ENCODE measurements at regions of chr3 and their contacts with region 1.

Region 1: GRCh38 chr3:63961891-63962290 is 49.7 kb upstream of the SCAANT1 start:
- DNase-seq: peak; percentile 15
- H3K4me3 ChIP-seq: no peak overlapping the region
- H3K27ac ChIP-seq: no peak overlapping the region
- H3K4me1 ChIP-seq: no peaks in the 10 kb centered on the region
- H3K27me3 ChIP-seq: no peaks in the 10 kb centered on the region
- CTCF ChIP-seq: peak in 3 of 4 experiments; percentile 52 to 73 (median 69)
- POLR2A ChIP-seq: no peak

Region 2: DNA sequence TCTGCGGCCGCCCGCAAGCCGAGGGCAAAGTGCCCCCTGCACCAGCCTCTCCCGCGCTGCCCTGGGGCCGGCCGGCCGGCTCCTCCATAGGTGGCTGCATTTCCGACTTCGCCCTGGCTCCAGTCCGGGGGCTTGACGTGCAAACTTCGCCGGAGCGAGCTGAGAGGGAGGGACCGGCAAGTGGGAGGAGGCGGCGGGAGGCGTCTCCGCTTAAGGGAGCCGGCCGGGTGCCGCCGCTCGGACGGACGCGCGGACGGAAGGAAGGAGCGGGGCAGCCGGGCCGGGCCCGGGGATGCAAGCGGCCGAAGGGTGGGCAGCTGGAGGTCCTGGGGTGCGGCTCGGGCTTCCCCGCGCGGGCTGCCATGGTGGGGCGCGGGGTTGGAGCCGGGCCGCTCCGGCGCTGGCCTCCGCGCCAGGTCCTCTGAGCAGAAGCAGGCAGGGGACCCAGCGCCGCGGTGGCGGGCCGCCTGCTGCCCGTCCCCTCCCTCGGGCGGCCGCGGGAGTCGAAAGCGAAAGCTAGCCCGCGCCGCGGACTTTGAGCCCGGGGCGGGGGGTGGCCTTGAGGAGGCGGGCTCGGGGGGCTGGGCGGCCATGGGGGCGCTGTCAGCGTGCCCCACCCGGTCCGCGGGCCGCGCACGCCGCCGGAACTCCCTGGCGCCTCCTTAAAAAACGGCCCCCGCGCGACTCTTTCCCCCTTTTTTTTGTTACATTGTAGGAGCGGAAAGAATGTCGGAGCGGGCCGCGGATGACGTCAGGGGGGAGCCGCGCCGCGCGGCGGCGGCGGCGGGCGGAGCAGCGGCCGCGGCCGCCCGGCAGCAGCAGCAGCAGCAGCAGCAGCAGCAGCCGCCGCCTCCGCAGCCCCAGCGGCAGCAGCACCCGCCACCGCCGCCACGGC is 49.8 kb before region 1 on chr3 and contains the start of gene SCAANT1:
- intact Hi-C with region 1: loop called (anchors 5 kb)
- DNase-seq: peak; percentile 87
- H3K4me3 ChIP-seq: peak within 1 kb of the TSS; percentile 79 to 93
- H3K27ac ChIP-seq: peak within 1 kb of the TSS; percentile 93 to 98
- H3K4me1 ChIP-seq: peaks cover 3% of the 10 kb centered on the region
- H3K27me3 ChIP-seq: no peaks in the 10 kb centered on the region
- CTCF ChIP-seq: peak in 2 of 4 experiments; percentile 13 to 24
- POLR2A ChIP-seq: peak; percentile 55
- total RNA-seq, gene SCAANT1: not detected

Region 3: GRCh38 chr3:64438812-64439211 is 476.9 kb after region 1 on chr3:
- intact Hi-C with region 1: no loop called
- DNase-seq: no peak
- H3K4me3 ChIP-seq: no peak overlapping the region
- H3K27ac ChIP-seq: no peak overlapping the region
- H3K4me1 ChIP-seq: no peaks in the 10 kb centered on the region
- H3K27me3 ChIP-seq: no peaks in the 10 kb centered on the region
- CTCF ChIP-seq: no peak
- POLR2A ChIP-seq: no peak

Measured in prostate gland (tissue), 2 donors.